ENCODE measurements at regions of chr3 and their contacts with region 1.

Region 1: DNA sequence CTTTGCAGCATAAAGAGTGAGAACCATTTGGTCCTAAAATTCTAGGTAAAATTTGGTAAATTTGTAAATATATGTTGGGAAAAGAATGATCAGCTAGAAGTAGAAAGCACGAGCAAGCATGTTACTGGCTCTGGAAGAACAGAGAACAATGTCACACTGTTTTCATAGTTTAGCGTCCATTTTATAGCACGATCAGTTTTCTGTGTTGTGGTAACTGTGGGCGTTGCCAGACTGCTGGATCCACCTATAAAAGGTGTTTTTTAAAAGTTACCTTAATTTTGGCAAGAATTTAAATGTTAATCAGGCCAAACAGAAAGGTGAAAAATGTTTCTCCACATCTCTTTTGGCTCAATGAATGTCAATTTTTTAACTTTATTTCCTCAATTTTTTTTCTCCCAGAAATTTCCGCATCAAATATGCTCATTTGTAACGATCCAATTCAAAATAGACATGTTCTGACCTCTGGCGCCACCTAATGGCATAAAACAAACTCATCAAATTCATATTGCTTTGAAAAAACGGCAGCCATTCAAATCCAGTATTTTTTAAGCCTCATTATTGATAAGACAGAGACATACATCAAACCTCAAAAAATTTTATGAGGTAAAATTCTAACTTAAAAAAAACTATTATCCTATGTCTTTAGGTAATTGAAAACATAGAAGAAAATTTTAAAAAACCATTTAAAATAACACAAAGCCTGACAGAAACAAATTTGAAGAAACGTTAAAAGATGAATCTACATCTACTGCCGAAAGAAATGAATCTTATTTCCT is 5.5 kb upstream of the GP5 start:
- DNase-seq: peak; percentile 72
- H3K4me3 Mint-ChIP-seq: no peak overlapping the region
- H3K27ac Mint-ChIP-seq: no peak overlapping the region
- H3K4me1 Mint-ChIP-seq: peaks cover 9% of the 10 kb centered on the region
- H3K27me3 Mint-ChIP-seq: no peaks in the 10 kb centered on the region
- CTCF ChIP-seq: peak; percentile 79

Region 2: DNA sequence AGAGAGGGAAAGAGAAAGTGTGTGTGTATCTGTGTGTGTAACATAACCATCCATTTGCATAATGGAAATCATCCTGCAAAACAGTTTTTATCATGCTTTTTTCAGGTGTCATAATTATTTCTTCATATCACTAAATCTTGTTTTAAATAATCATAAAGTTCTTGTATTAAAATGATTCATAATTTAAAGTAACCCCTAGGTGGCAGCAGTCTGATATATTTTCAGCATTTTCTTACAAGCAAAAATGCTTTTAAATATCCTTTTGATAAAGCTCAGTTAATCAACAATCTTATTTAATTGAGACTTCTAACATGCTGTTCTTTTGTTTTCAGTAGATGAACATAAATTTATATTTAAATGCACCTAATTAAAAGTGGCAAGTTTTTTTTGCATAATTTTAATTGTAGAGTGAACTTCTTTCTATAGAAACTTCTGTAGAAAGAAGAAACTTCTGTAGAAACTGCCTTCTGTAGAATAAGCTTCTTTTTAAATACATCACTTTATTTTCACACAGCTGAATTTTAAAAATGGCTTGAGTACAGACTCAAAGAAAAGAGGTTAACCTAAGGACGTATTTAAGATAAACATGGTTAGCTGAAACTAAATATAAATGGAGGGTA is 739.1 kb before region 1 on chr3:
- CTCF ChIA-PET with region 1: no interaction called
- intact Hi-C with region 1: loop called (anchors 1 kb)
- DNase-seq: no peak
- H3K4me3 Mint-ChIP-seq: no peak overlapping the region
- H3K27ac Mint-ChIP-seq: no peak overlapping the region
- H3K4me1 Mint-ChIP-seq: no peaks in the 10 kb centered on the region
- H3K27me3 Mint-ChIP-seq: no peaks in the 10 kb centered on the region
- CTCF ChIP-seq: peak; percentile 74

Region 3: DNA sequence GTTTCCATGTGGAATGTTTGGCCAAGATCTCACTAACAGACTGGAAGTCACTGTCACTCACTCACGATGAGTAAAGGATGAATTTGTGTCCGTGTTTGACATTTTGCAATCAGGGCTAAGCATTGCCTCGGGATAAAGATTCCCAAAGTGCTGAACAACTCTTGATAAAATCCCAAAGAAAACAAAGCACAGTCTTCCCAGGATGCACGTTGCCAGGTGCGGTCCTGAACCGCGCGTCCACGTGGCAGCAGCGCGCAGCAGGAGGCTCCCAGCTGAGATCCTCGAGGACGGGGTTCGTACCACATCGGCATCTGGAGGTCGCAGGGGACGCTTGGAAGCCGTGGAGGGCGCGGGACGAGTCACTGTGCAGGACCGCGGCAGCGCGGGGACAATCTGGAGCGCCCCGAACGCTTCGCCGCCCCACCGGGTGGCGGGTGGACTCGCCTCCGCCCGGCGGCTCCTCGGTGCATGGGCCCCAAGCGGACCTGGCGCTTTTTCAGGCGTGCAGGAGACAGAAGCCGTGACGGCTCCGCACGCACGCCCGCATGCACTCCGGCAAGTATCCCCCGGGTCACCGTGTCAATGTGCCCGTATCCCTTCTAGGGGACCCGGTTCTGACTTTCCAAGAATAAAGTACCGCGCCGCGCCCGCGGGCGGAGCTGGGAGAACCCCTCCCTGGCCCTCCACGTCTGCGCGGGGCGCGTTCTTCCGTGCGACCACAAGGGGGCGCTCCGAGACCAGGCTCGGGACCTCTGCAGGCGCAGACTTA is 71.2 kb before region 1 on chr3:
- CTCF ChIA-PET with region 1: interaction called, 5 read pairs
- intact Hi-C with region 1: loop called (anchors 1 kb)
- DNase-seq: peak; percentile 97
- H3K4me3 Mint-ChIP-seq: peak overlapping the region; percentile 82
- H3K27ac Mint-ChIP-seq: peak overlapping the region; percentile 26
- H3K4me1 Mint-ChIP-seq: peaks cover 22% of the 10 kb centered on the region
- H3K27me3 Mint-ChIP-seq: peaks cover 19% of the 10 kb centered on the region
- CTCF ChIP-seq: peak; percentile 100